ENCODE measurements at regions of chr6 and their contacts with region 1.

Region 1: DNA sequence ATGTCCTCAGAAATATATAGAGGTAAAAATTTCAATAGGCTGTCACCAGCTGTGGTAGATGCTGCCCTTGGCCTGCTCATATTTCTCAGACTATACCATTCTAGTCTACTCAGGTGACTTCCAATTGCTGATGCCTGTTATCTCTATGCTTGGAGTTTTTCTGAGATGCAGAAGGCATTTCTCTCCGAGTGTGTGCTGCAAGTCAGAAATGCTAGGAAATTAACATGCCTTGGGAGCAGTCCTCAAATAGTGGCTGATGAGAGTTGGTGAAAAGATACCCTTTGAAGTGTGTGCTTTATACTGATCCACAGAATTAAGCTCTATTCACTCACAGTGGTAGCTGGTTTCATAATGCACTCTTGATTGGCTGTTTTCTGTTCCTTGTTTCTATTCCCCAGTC is 43.2 kb upstream of the PKIB start:
- DNase-seq: no peak
- H3K4me3 ChIP-seq: no peak overlapping the region
- H3K4me3 Mint-ChIP-seq: no peak overlapping the region
- H3K27ac ChIP-seq: no peak overlapping the region
- H3K27ac Mint-ChIP-seq: peak overlapping the region in 1 of 8 donors; percentile 61
- H3K4me1 ChIP-seq: no peaks in the 10 kb centered on the region
- H3K4me1 Mint-ChIP-seq: no peaks in the 10 kb centered on the region
- H3K27me3 ChIP-seq: no peaks in the 10 kb centered on the region
- H3K27me3 Mint-ChIP-seq: peaks cover 5 to 27% of the 10 kb centered on the region in 2 donors

Region 2: DNA sequence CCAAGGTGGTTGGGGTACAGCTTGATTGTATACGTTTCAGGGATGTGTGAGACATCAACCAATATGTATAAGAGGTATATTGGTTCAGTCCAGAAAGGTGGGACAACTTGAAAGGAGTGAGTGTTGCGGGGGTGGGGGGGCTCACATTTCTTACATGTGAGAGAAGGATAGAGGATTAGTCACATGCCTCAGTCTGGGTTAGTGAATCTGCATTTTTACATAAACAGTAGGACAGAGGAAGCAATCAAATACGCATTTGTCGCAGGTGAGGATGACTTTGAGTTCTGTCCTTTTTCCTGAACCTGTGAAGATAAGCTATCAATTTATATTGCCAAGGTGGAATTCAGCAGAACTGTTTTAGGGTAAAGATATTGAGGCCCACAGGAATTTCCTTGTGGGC is 1190.6 kb before region 1 on chr6:
- CTCF ChIA-PET with region 1: no interaction called
- POLR2A ChIA-PET with region 1: interaction called, 10 read pairs
- DNase-seq: no peak
- H3K4me3 ChIP-seq: no peak overlapping the region
- H3K4me3 Mint-ChIP-seq: no peak overlapping the region
- H3K27ac ChIP-seq: no peak overlapping the region
- H3K27ac Mint-ChIP-seq: no peak overlapping the region
- H3K4me1 ChIP-seq: no peaks in the 10 kb centered on the region
- H3K4me1 Mint-ChIP-seq: no peaks in the 10 kb centered on the region
- H3K27me3 ChIP-seq: no peaks in the 10 kb centered on the region
- H3K27me3 Mint-ChIP-seq: peaks cover 0 to 5% of the 10 kb centered on the region in 2 donors